ENCODE measurements at regions of chr12 and their contacts with region 1.

Region 1: GRCh38 chr12:14937689-14938088 is 648 bp downstream of the ERP27 start:
- DNase-seq: no peak
- H3K4me3 ChIP-seq: no peak overlapping the region
- H3K27ac ChIP-seq: no peak overlapping the region
- H3K4me1 ChIP-seq: no peaks in the 10 kb centered on the region
- H3K27me3 ChIP-seq: no peaks in the 10 kb centered on the region
- CTCF ChIP-seq: no peak
- EP300 ChIP-seq: no peak
- POLR2A ChIP-seq: no peak

Region 2: DNA sequence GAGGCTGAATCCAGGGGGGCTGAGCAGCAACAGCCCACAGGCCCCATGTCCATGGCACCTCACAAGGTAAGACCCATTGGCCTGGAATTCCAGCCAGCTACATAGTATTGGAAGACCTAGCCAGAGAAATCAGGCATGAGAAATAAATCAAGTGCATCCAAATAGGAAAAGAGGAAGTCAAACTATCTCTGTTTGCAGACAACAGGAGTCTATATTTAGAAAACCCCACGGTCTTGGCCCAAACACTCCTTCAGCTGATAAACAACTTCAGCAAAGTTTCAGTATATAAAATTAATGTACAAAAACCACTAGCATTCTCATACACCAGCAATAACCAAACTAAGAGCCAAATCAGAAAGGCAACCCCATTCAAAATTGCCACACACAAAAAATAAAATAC is 52.1 kb after region 1 on chr12:
- intact Hi-C with region 1: loop called in 1 of 4 experiments (anchors 10 kb)
- DNase-seq: no peak
- H3K4me3 ChIP-seq: no peak overlapping the region
- H3K27ac ChIP-seq: no peak overlapping the region
- H3K4me1 ChIP-seq: no peaks in the 10 kb centered on the region
- H3K27me3 ChIP-seq: no peaks in the 10 kb centered on the region
- CTCF ChIP-seq: no peak
- EP300 ChIP-seq: no peak
- POLR2A ChIP-seq: no peak